Thyroid gland (tissue), 4 donors: ENCODE measurements at regions of chr9 and their contacts with region 1.

Region 1: DNA sequence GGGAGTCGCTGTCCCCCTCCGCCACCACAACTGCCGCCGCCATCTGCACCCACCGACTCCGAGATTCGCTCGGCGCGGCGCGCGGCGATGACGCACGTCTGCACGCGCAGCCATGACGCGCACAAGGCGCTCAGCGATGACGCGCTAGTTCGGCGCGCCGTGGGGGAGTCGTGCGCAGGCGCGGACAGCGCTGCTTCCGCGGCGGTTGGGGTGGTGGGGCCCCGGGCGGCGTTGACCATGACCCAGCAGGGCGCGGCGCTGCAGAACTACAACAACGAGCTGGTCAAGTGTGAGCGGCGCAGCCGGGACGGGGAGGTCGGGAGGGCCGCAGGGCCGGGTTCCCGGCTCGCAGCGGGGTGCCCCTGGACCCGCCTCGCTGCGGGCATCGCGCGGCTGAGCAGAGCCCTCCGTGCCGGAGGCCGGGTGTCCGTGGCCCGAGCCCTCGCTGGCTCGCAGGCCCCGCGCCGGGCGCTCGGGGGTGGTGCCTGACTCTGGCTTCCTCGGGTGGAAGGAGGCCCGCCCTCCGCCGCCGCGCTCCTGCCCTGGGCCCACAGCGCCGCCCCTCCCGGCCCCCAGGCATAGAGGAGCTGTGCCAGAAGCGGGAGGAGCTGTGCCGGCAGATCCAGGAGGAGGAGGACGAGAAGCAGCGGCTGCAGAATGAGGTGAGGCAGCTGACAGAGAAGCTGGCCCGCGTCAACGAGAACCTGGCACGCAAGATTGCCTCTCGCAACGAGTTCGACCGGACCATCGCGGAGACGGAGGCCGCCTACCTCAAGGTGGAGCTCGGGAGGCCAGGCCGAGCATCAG is at the starts of genes ANAPC2 and SSNA1:
- DNase-seq: peak; percentile 92 to 93
- H3K4me3 ChIP-seq: peak within 1 kb of the TSS; percentile 70 to 90 (median 86)
- H3K27ac ChIP-seq: peak within 1 kb of the TSS; percentile 70 to 88 (median 86)
- H3K4me1 ChIP-seq: peaks cover 29 to 30% of the 10 kb centered on the region in 2 donors
- H3K27me3 ChIP-seq: no peaks in the 10 kb centered on the region
- CTCF ChIP-seq: peak in 2 of 6 experiments; percentile 28 to 53
- POLR2A ChIP-seq: peak; percentile 31 to 87
- total RNA-seq, gene ANAPC2: 25.6 to 34.1 (median 31.8) TPM
- total RNA-seq, gene SSNA1: 42.0 to 97.5 (median 62.8) TPM

Region 2: GRCh38 chr9:136858844-136859757 is 329.6 kb before region 1 on chr9:
- intact Hi-C with region 1: no loop called
- DNase-seq: peak; percentile 86 to 87
- H3K4me3 ChIP-seq: no peak overlapping the region
- H3K27ac ChIP-seq: peak overlapping the region; percentile 24 to 61 (median 30)
- H3K4me1 ChIP-seq: peaks cover 8 to 18% of the 10 kb centered on the region in 2 donors
- H3K27me3 ChIP-seq: no peaks in the 10 kb centered on the region
- CTCF ChIP-seq: no peak
- POLR2A ChIP-seq: no peak

Region 3: GRCh38 chr9:137034863-137035761 is 153.6 kb before region 1 on chr9:
- intact Hi-C with region 1: no loop called
- DNase-seq: peak; percentile 82 to 84
- H3K4me3 ChIP-seq: no peak overlapping the region
- H3K27ac ChIP-seq: peak overlapping the region in 1 of 3 donors; percentile 49
- H3K4me1 ChIP-seq: peaks cover 10 to 21% of the 10 kb centered on the region in 2 donors
- H3K27me3 ChIP-seq: no peaks in the 10 kb centered on the region
- CTCF ChIP-seq: peak; percentile 79 to 94 (median 89)
- POLR2A ChIP-seq: no peak

Region 4: DNA sequence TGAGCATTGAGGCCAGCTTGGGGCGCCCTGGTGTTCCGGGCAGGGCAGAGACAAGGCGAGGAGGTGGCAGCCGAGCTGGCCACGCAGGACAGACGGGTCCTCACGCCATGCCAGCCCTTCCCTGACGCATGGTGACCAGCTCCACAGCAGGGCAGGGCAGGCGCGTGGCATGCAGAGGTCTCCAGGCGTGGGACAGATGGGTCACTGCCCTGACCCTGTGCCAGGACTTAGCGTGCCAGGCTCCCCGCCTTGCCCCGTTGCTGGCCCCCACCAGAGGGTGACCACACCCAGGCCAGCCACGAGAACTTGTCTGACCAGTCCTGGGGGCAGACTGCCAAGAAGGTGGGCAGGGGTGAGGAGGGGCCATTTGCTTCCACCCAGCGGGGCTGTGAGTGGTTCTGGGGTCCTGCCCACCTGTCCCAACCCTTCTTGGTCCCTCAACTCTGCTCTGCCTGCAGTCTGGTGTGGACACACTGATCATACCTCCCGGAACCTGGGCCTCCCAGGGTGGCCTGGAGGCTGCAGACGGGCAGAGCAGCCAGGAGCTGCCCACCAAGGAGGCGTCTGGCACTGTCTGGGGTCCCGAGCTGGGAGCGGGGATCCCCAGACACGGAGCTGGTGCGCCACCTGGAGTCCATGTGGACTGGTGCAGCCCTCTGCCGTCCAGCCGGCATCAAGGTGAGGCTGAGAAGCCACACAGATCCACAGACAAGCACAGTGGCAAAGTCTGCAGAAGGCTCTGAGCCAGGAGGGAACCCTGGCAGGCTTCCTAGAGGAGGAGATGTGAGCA is 38.6 kb after region 1 on chr9 and contains the start of gene RNF224:
- intact Hi-C with region 1: loop called (anchors 5 kb)
- DNase-seq: peak; percentile 98
- H3K4me3 ChIP-seq: no peak within 1 kb of the TSS
- H3K27ac ChIP-seq: peak within 1 kb of the TSS; percentile 67 to 87 (median 85)
- H3K4me1 ChIP-seq: peaks cover 31 to 42% of the 10 kb centered on the region in 2 donors
- H3K27me3 ChIP-seq: no peaks in the 10 kb centered on the region
- CTCF ChIP-seq: peak; percentile 89 to 98 (median 93)
- POLR2A ChIP-seq: peak in 1 of 2 donors; percentile 22
- total RNA-seq, gene RNF224: 0.33 to 0.81 TPM in 2 of 4 donors, not detected in the others